ENCODE measurements at regions of chr17 and their contacts with region 1.

Region 1: DNA sequence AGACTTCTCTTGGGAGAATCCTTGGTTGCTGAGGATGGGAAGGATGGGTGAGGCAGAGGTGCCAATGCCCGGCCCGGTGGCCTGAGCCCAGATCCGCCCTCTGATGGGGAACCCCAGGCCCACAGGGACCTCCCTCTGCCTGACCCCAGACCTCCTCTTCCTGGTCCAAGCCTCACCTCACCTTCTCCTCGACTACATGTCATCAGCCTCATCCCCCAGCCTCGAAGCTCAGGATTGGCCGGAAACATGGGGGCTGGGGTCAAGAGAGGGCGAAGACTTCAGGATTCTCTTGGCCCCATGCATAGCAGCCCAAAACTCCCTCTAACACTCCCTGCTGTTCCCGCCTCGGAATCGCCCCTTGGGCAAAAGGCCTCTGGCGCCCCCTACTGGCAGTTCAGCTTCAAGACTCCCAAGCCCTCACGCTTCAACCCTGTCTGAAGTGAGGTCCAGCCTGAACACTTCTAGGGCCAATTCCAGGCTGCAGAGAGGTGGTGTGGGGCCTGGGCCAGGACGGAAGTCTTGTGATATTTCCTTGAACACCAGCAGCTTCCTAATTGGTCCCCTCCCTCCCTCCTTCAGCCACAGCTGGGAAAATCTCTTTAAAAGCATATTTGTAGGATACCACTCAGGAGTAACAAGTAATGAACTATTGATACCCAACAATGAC is 47.2 kb downstream of the ARHGAP27 start:
- DNase-seq: peak; percentile 92
- ATAC-seq: peak; percentile 93

Region 2: DNA sequence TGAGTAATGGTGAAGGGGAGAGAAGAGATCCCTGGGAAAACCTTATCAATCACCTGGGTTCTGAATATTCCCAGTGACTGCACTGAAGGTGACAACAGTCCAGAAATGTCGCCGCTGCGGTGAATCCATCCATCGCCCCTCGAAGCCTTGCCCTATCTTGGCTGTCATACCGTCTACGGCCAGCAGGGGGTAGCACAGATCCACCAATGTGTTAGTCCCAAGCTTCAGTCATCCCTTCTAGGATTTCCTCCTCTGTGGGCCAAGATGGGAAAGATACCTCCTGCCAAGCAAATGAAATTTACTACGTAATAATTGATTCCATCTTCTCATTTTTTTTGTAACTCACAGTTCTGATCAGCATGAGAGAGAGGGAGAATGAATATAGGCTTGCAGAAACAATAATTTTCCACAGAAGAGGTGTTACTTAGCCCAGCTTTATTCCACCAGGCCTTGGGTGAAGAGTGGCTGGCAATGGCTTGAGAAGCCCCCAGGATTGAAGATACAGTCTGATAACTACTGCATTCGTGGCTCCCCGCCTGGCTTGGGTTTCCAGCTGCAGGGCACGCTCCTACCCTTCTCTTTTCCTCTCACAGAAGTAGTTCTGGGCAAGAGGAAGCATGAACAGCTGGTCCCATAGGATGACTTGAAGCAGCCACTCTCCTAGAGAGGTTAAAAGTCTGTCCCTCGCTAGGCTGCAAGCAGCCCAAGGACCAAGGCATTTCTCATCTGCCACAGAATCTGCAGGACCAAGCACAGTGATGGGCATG is 166.4 kb before region 1 on chr17:
- intact Hi-C with region 1: loop called (anchors 10 kb)
- DNase-seq: peak; percentile 92
- ATAC-seq: peak; percentile 80

Region 3: GRCh38 chr17:45277216-45277849 is 108.1 kb before region 1 on chr17:
- intact Hi-C with region 1: loop called (anchors 5 kb)
- DNase-seq: peak; percentile 98
- ATAC-seq: peak; percentile 71

Region 4: DNA sequence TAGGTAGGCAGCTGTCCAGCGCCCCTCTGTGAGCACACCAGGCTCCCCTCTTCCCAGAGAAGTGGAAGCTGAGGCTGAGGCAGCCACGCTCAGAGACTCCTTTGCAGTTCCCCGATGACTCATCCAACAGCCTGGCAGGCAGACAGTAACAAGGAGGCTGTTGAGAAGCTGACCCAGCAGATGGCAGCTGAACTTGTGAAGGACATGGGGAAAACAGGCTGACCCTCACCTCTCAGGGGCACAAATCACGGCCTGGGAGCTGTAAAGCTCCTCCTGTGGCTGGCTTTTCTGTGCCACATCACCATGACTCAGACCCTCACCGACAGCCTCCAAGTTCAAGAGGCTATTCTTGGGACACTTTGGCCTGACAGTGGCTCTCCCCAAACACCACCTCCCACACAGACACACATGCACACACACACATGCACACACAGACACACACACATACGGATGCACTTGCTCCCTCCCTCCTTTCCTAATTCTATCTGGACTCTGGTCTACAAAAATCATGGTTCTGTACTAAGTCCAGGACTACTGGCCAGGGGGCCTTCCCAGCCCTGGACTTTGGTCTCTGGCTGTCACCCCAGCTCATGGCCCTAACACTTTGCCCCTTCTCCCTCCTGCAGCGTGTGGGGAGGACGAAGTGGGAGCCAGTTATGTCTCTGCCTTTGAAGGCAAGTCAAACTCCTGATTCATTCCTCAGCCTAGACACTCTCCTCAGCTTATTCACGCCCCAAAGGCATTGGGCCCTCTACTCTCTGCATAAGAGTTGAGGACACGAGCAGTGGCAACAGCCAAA is 91.9 kb before region 1 on chr17:
- intact Hi-C with region 1: no loop called
- DNase-seq: peak; percentile 83
- ATAC-seq: peak; percentile 73

Measured in left ventricle myocardium superior (tissue), 1 donor.